Tibial artery (tissue), 4 donors: ENCODE measurements at regions of chr22 and their contacts with region 1.

Region 1: DNA sequence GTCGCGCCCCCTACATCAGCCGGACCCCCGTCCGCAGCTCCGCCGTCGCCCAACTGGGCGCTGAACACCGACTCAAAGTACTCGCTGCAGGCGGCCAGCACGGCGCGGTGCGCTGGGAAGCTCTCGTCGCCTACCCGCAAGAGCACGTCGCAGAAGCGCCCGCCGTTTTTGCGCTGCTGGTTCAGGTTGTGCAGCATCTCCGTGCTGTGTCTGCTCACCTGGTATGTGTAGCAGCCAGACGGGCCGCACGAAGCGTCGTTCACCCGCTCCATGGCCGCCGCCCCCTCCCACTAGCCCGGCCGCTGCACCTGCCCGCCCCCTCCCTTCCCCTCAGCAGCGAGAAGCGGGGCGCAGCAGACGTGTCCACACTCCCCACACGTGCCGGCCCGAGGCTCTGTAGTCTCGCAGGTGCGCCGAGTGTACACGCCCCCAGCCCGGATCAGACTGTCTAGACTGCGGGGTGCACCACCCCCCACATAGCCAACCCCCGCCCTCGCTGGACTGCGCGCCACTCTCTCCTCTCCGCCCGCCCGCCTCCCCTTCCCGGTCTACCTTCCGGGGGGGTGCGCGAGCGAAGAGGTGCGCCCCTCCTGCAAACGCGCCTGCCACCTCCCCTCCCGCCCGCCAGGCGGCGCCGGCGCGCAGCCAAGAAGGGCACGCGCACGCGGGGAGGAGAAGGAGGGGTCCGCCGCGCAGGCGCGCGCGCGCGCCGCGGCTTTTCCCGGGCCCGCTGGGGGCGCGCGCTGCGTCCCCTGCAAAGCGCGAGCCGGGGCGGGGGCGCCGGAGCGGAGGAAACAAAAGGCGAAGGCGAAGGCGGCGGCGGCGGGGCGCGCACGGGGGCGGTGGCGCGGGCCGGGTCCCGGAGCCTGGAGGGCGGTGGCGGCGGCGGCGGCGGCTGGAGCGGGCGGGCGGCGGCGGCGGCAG is 553 bp downstream of the PATZ1 start:
- DNase-seq: peak; percentile 77 to 88
- H3K4me3 ChIP-seq: peak overlapping the region; percentile 75 to 87
- H3K27ac ChIP-seq: peak overlapping the region; percentile 81 to 85
- H3K4me1 ChIP-seq: peaks cover 0 to 56% (median 35%) of the 10 kb centered on the region in 4 donors
- H3K27me3 ChIP-seq: no peaks in the 10 kb centered on the region
- CTCF ChIP-seq: peak; percentile 86 to 96

Region 2: GRCh38 chr22:31399211-31400028 is 53.8 kb after region 1 on chr22 and contains the start of gene DRG1:
- intact Hi-C with region 1: loop called (anchors 5 kb)
- DNase-seq: peak; percentile 96 to 98
- H3K4me3 ChIP-seq: peak within 1 kb of the TSS; percentile 74 to 78
- H3K27ac ChIP-seq: peak within 1 kb of the TSS; percentile 78 to 84
- H3K4me1 ChIP-seq: peaks cover 0 to 26% (median 10%) of the 10 kb centered on the region in 4 donors
- H3K27me3 ChIP-seq: no peaks in the 10 kb centered on the region
- CTCF ChIP-seq: peak; percentile 7 to 28